ENCODE measurements at regions of chr3 and their contacts with region 1.

Region 1: DNA sequence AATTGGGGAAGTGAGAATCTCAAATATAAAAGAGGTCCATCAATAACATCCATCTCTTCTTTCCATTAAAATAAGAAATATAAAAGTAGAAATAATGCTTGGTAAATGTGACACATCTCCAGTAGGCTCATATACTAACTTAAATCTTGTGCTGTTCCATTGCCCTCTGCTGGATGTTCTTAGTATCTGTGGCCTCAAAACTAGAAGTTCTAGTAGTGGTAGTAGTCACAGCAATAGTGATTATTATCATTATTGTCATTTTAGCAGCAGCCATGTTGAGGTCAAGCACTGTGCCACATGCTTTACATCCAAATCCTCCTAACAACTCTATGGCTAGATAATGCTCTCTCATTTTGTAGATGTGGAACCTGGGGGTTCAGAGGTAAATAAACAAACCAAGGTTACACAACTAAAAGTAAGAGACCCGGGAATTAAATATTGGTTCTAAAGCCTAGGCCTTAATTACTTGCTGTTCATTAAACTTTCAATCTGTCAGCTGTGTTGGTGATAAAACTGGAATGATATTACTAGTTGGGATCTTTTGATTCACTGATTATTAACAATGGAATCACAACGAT is 20.2 kb upstream of the BTLA start:
- DNase-seq: peak; percentile 36
- ATAC-seq: peak; percentile 92
- H3K4me3 ChIP-seq: no peak overlapping the region
- H3K27ac ChIP-seq: no peak overlapping the region
- H3K4me1 ChIP-seq: no peaks in the 10 kb centered on the region
- H3K27me3 ChIP-seq: no peaks in the 10 kb centered on the region
- CTCF ChIP-seq: peak; percentile 75; the same call in 1 of the 2 replicates

Region 2: GRCh38 chr3:111882799-111883198 is 636.7 kb before region 1 on chr3:
- CTCF ChIA-PET with region 1: no interaction called
- POLR2A ChIA-PET with region 1: no interaction called
- in situ Hi-C with region 1: no loop called
- intact Hi-C with region 1: loop called (anchors 10 kb)
- DNase-seq: no peak
- ATAC-seq: no peak
- H3K4me3 ChIP-seq: no peak overlapping the region
- H3K27ac ChIP-seq: no peak overlapping the region
- H3K4me1 ChIP-seq: no peaks in the 10 kb centered on the region
- H3K27me3 ChIP-seq: no peaks in the 10 kb centered on the region
- CTCF ChIP-seq: no peak

Region 3: DNA sequence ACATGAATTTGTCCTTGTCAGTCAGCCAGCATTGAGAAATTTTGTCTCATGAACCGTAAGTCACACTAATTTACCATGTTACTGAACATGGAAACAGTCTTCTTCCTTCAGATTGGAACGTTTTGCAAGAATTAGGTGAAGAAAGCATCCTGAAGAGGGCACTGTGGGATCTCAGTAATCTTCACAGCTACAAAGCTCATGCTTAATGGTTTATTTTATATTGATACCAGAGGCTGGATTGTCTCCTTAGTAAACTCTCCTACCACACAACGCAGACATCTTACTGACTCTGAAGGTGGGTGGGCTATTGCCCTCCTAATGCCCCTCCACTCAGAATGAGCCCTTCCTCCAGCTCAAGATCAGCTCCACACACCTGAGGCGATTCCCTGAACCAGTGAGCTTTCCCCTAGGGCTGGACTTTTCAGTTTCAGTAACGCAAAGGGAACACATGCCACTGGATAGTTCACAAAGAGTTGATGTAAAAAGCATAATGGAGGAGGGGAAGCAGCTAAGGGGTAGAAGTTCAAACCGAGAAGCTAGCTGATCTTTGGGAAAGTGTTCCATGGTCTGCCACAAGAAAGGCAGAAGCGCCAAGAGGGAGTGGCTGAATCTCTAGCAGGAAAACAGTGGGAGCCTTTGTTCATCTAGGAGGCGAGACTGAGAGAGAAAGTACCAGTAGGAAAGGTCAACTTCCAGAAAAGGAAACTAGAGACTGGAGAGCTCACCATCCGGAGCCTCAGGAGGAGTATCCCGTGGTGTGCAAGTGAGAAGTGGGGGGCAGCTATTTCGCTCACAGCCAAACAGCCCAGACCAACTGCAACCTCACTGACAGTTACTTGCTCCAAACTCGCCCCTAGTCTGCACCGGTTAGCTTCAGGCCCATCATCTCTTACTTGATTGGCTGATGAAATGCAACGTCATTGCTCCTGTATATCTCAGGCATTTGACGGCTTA is 225.9 kb before region 1 on chr3 and contains the start of gene SLC9C1:
- CTCF ChIA-PET with region 1: no interaction called
- POLR2A ChIA-PET with region 1: no interaction called
- in situ Hi-C with region 1: no loop called
- intact Hi-C with region 1: loop called (anchors 1 kb)
- DNase-seq: peak; percentile 58
- ATAC-seq: peak; percentile 92
- H3K4me3 ChIP-seq: peak within 1 kb of the TSS; percentile 19 to 49
- H3K27ac ChIP-seq: no peak within 1 kb of the TSS
- H3K4me1 ChIP-seq: no peaks in the 10 kb centered on the region
- H3K27me3 ChIP-seq: no peaks in the 10 kb centered on the region
- CTCF ChIP-seq: peak; percentile 78
- total RNA-seq, gene SLC9C1: not detected

Region 4: DNA sequence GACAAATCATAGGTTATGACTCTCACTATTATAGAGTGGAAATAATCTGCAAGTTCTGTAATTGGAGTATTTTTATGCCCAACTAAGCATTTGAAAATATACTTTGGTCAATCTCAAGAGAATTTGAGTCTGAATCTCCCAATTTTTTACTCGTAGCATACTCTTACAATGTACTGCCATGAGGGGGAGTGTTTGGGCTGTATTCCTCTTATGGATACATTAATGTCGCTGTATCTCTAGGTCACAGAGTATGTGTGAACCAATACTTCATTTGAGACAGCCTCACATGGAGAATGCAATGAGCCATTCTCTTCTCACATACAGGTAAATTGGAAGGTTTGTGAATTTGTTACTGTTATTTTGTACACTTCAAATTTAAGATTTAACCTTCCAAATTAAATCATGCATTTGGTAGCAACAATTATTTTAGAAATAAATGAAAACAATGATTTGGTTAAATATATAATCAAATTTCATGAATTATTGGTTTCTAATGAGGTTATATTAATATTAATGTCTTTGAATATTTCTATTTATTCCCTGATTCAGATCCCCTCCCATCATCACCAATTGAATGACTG is 192.1 kb before region 1 on chr3:
- CTCF ChIA-PET with region 1: no interaction called
- POLR2A ChIA-PET with region 1: no interaction called
- in situ Hi-C with region 1: no loop called
- intact Hi-C with region 1: loop called (anchors 1 kb)
- DNase-seq: no peak
- ATAC-seq: peak; percentile 96
- H3K4me3 ChIP-seq: no peak overlapping the region
- H3K27ac ChIP-seq: no peak overlapping the region
- H3K4me1 ChIP-seq: no peaks in the 10 kb centered on the region
- H3K27me3 ChIP-seq: peaks cover 4% of the 10 kb centered on the region; the same call in 1 of the 2 replicates
- CTCF ChIP-seq: peak; percentile 64; the same call in 1 of the 2 replicates

Region 5: DNA sequence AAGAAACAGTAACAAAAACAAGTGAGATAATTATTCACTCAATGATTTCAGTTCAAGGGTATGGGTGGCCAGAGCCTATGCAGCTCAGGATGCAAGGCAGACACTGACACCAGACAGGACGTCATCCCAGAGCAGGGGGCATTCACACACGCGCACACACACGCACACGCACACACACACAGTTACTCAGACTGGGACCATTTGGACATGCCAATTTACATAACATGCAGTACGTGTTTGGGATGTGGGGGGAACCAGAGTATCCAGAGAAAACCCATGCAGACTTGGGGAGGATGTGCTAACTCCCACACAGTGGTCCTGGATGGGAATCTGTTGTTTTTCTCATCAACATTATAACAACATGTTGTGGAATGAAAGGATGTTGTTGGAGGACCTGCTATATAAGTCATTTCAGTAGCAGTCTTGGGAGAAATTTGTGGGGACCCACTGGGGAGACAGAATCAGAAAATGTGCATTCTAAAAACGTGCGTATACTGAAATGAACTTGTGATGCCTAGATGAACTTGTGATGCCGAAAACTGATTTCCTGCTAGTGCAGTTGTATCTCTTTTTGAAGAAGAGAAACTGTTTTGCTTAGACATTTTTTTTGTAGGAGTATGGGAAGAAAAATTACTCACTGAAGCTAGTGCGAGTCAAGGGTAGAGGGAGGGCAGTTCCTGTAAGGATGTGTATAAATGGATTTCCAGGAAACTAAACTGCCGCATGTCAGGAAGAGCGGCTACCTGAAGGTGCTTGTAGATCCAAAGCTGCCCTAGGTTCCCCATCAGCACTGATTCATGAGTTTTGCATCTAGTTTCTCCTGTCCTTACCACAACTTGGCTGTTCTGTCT is 161.4 kb before region 1 on chr3:
- CTCF ChIA-PET with region 1: no interaction called
- POLR2A ChIA-PET with region 1: no interaction called
- in situ Hi-C with region 1: no loop called
- intact Hi-C with region 1: no loop called
- DNase-seq: no peak
- ATAC-seq: no peak
- H3K4me3 ChIP-seq: no peak overlapping the region
- H3K27ac ChIP-seq: no peak overlapping the region
- H3K4me1 ChIP-seq: no peaks in the 10 kb centered on the region
- H3K27me3 ChIP-seq: no peaks in the 10 kb centered on the region
- CTCF ChIP-seq: no peak